ENCODE measurements at regions of chr9 and their contacts with region 1.

Region 1: GRCh38 chr9:115944166-115944948 is 209.2 kb upstream of the PAPPA start:
- DNase-seq: peak; percentile 99
- H3K4me3 ChIP-seq: no peak overlapping the region
- H3K27ac ChIP-seq: peak overlapping the region; percentile 96
- H3K27me3 ChIP-seq: no peaks in the 10 kb centered on the region
- CTCF ChIP-seq: no peak

Region 2: GRCh38 chr9:115850548-115851304 is 93.6 kb before region 1 on chr9:
- CTCF ChIA-PET with region 1: no interaction called
- POLR2A ChIA-PET with region 1: interaction called, 12 read pairs
- DNase-seq: peak; percentile 54
- H3K4me3 ChIP-seq: no peak overlapping the region
- H3K27ac ChIP-seq: no peak overlapping the region
- H3K27me3 ChIP-seq: no peaks in the 10 kb centered on the region
- CTCF ChIP-seq: no peak

Region 3: DNA sequence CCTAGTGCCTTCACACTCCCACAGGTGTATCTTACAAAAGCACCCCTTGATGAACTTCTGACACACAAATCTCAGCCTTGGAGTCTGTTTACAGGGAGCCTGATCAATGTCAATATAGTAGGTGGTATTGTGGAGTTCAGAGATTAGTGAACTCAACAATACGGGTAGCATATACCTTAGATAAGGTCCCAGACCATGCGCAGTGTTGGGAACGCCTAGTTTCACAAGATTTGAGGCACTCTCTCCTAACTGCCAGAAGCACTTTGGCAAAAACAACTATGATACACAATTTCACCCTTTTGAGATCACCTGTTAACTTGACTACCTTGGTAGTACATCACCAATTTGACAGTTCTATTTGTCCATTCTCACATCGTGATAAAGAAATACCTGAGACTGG is 27.7 kb before region 1 on chr9:
- CTCF ChIA-PET with region 1: no interaction called
- POLR2A ChIA-PET with region 1: no interaction called
- DNase-seq: no peak
- H3K4me3 ChIP-seq: no peak overlapping the region
- H3K27ac ChIP-seq: no peak overlapping the region
- H3K27me3 ChIP-seq: no peaks in the 10 kb centered on the region
- CTCF ChIP-seq: no peak

Region 4: GRCh38 chr9:115997923-115998322 is 53.6 kb after region 1 on chr9:
- CTCF ChIA-PET with region 1: no interaction called
- POLR2A ChIA-PET with region 1: interaction called, 11 read pairs
- DNase-seq: peak; percentile 48
- H3K4me3 ChIP-seq: no peak overlapping the region
- H3K27ac ChIP-seq: peak overlapping the region; percentile 63
- H3K27me3 ChIP-seq: no peaks in the 10 kb centered on the region
- CTCF ChIP-seq: no peak

Region 5: DNA sequence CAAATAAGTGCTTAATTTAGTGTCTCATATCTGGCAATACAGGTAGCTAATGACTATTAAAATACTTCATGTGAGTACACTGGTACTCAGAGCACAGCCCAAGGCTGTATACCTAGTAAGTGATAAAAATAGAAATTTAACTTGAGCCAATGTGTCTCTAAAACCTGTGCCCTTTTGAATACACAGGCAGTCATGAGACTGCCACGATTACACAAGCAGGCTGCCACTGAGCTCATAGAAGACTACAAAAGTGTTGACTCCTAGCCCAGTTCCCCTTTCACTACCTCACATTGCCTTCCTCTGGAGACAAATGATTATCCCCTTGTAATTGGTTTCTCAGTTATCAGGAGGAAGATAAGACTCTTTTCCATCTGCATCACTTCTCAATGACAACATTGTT is 142.9 kb after region 1 on chr9:
- CTCF ChIA-PET with region 1: no interaction called
- POLR2A ChIA-PET with region 1: interaction called, 12 read pairs
- DNase-seq: peak; percentile 42
- H3K4me3 ChIP-seq: no peak overlapping the region
- H3K27ac ChIP-seq: no peak overlapping the region
- H3K27me3 ChIP-seq: no peaks in the 10 kb centered on the region
- CTCF ChIP-seq: no peak